ENCODE measurements at regions of chrX and their contacts with region 1.

Region 1: DNA sequence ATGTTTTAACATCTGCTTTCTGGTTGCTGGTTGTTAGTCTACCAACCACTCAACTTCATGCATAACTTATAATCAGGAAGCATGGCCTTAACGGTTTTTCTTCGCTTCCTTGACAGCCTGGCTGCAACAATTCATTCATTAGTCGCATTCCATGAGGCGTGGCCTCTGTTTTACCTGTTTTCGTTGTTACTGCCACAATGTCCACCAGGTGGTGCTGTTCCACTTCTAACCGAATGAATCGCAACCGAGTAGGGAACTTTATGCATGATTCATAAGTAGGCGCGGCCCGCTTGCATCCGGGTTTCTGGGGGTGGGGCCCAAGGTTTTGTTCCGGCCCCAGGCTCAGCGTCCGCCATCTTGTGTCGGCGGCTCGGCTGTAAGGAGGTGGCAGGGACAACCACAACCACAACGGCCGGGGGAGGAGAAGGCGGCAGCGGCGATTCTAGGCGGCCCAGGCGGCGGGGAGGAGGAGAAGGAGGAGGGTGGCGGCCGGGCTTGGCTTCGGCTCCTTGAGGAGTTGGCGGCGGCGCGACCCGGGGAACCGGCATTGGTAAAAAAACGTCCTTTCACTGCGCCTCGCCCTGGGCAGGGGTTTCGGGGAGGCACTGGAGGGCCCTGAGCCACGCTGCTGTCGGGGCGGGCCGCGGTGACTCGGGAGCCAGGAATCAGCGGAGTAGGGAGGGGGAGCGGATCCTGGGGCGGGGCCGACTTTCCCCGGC is at the start of gene UBA1:
- DNase-seq: peak; percentile 86
- ATAC-seq: peak; percentile 87
- H3K4me3 ChIP-seq: peak within 1 kb of the TSS; percentile 86 to 96
- H3K27ac ChIP-seq: peak within 1 kb of the TSS; percentile 94
- H3K4me1 ChIP-seq: peaks cover 33% of the 10 kb centered on the region
- H3K27me3 ChIP-seq: no peaks in the 10 kb centered on the region
- CTCF ChIP-seq: peak; percentile 79
- total RNA-seq, gene UBA1: 302 TPM

Region 2: DNA sequence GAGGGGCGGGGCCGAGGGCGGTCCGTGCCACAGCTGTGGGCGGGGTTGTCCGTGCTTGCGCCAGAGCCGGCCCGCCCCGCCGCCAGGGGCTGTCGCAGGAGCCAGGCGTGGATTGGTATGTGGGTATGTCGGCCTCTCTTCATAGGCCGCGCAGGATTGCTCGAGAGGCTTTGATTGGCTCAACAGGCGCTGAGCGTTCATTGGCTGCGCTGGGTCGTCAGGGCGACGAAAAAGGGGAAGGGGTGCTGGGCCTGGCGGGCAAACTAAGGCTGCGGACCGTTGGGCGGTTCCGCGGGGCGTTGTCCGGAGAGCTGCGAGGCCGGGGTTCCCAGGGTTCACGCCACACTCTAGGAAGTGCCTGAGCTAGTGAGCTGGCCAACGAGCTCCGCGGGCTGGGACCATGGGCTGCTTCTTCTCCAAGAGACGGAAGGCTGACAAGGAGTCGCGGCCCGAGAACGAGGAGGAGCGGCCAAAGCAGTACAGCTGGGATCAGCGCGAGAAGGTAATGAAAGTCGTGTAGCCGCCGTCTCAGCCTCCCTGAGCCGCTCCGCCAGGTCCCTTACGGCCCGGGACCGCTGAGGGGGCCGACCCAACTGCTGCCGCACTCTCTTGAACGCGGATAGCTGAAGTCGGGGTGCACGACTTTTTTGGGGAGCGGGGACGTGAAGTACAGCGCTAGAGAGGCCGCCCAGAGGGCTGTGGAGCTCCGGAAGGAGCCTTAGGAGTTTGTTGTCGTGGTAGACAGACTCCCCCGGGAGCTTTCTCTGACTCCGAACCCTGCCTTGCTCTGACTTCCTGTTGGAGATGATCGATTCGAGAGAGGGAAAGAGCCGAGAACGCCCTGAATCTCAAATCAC is 356.7 kb before region 1 on chrX and contains the start of gene RP2:
- CTCF ChIA-PET with region 1: no interaction called
- POLR2A ChIA-PET with region 1: no interaction called
- in situ Hi-C with region 1: no loop called
- intact Hi-C with region 1: no loop called
- DNase-seq: peak; percentile 61
- ATAC-seq: peak; percentile 99
- H3K4me3 ChIP-seq: peak within 1 kb of the TSS; percentile 92 to 94
- H3K27ac ChIP-seq: peak within 1 kb of the TSS; percentile 93
- H3K4me1 ChIP-seq: peaks cover 8% of the 10 kb centered on the region
- H3K27me3 ChIP-seq: no peaks in the 10 kb centered on the region
- CTCF ChIP-seq: no peak
- total RNA-seq, gene RP2: 17.3 TPM

Region 3: DNA sequence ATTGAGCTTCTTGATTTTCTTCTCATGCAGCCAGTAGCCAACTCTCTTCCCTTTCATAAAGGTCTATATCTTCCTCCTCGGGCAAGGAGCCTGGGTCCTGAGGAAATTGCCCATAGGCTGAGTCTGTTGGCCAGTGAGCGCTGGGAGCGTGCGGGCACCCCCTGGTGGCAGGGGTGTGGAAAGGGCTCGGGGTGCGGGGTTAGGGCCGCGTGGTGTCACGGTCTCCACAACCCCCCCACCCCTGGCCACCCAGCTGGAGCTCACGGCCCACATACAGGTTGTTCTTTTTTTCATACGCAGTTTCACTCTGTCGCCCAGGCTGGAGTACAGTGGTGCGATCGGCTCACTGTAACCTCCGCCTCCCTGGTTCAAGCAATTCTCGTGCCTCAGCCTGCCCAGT is 35.5 kb before region 1 on chrX:
- CTCF ChIA-PET with region 1: no interaction called
- POLR2A ChIA-PET with region 1: interaction called, 11 read pairs
- in situ Hi-C with region 1: no loop called
- intact Hi-C with region 1: no loop called
- DNase-seq: no peak
- ATAC-seq: no peak; the same call in 1 of the 2 replicates
- H3K4me3 ChIP-seq: no peak overlapping the region
- H3K27ac ChIP-seq: no peak overlapping the region
- H3K4me1 ChIP-seq: no peaks in the 10 kb centered on the region
- H3K27me3 ChIP-seq: no peaks in the 10 kb centered on the region
- CTCF ChIP-seq: no peak

Region 4: GRCh38 chrX:47384502-47384901 is 190.9 kb after region 1 on chrX:
- CTCF ChIA-PET with region 1: no interaction called
- POLR2A ChIA-PET with region 1: no interaction called
- in situ Hi-C with region 1: no loop called
- intact Hi-C with region 1: loop called (anchors 10 kb)
- DNase-seq: peak; percentile 39
- ATAC-seq: peak; percentile 80
- H3K4me3 ChIP-seq: no peak overlapping the region
- H3K27ac ChIP-seq: no peak overlapping the region
- H3K4me1 ChIP-seq: no peaks in the 10 kb centered on the region
- H3K27me3 ChIP-seq: no peaks in the 10 kb centered on the region
- CTCF ChIP-seq: peak; percentile 90

Region 5: DNA sequence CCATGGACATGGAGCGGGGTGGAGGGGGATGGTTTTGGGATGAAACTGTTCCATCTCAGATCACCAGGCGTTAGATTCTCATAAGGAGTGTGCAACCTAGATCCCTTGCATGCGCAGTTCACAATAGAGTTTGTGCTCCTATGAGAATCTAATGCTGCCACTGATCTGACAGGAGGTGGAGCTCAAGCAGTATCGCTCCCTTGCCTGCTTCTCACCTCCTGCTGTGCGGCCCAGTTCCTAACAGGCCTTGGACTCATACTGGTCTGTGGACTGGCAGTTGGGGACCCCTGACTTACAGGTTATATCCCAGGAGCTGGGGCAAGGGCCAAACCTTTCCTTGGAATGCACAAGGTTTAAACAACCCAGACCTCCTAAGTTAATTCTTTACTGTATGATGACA is 298.1 kb after region 1 on chrX:
- CTCF ChIA-PET with region 1: no interaction called
- POLR2A ChIA-PET with region 1: no interaction called
- in situ Hi-C with region 1: no loop called
- intact Hi-C with region 1: no loop called
- DNase-seq: no peak
- ATAC-seq: no peak
- H3K4me3 ChIP-seq: no peak overlapping the region
- H3K27ac ChIP-seq: no peak overlapping the region
- H3K4me1 ChIP-seq: no peaks in the 10 kb centered on the region
- H3K27me3 ChIP-seq: no peaks in the 10 kb centered on the region
- CTCF ChIP-seq: no peak

Region 6: DNA sequence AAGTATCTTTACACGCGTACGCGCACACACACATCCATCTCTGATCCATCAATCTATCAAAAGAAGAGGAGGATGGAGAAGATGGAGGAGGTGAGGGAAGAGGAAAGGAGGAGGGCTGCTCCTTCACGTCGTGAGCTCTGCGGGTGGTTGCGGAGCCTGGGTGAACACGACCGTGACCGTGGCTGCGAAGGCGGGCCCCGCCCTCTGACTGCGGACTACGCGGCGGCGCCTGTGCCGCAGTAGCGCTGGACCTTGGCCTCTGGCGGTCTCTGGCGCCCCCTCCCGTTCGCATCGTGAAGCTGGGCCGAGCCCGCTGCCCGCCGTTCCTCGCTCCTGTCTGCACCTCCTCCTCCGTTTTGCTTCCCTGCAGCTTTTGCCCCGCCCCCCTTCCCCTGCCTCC is 329.7 kb after region 1 on chrX:
- CTCF ChIA-PET with region 1: interaction called, 3 read pairs
- POLR2A ChIA-PET with region 1: no interaction called
- in situ Hi-C with region 1: no loop called
- intact Hi-C with region 1: loop called (anchors 10 kb)
- DNase-seq: no peak
- ATAC-seq: peak; percentile 99
- H3K4me3 ChIP-seq: peak overlapping the region; percentile 51 to 62
- H3K27ac ChIP-seq: peak overlapping the region; percentile 54
- H3K4me1 ChIP-seq: no peaks in the 10 kb centered on the region
- H3K27me3 ChIP-seq: no peaks in the 10 kb centered on the region
- CTCF ChIP-seq: peak; percentile 92

Measured in Panc1 (cell line).